ENCODE measurements at regions of chr1 and their contacts with region 1.

Region 1: DNA sequence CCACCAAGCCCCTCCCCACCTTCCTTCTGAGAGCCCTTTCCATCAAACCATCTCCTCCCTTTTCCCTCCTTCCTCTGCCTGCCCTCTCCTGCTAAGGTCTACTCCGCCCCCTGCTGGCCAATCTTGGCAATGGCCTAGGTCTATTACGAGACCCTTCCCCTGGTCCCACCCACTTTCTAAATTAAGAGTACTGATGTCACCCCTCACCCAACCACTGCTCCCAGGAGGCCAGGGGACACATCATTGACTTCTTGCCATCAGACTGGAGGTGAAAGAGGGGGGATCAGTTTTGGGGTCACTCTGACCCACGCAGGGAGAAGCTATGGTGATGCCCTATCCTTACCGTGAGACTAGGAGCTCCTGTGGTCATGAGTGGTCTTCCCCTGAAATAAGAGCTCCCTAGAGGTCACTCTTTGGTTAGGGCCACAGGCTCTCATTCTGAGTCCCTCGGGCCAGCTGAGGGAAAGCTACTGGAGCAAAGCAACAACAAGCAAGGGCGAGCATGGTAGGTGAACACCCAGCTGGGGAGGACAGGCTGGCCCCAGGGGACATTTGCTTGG is 34.6 kb upstream of the S100A7 start:
- DNase-seq: peak; percentile 63 to 79 (median 67)
- ATAC-seq: no peak
- H3K4me3 ChIP-seq: no peak overlapping the region
- H3K27ac ChIP-seq: no peak overlapping the region
- H3K4me1 ChIP-seq: peaks cover 8% of the 10 kb centered on the region
- H3K27me3 ChIP-seq: no peaks in the 10 kb centered on the region
- CTCF ChIP-seq: peak; percentile 71 to 96 (median 82)
- POLR2A ChIP-seq: no peak

Region 2: DNA sequence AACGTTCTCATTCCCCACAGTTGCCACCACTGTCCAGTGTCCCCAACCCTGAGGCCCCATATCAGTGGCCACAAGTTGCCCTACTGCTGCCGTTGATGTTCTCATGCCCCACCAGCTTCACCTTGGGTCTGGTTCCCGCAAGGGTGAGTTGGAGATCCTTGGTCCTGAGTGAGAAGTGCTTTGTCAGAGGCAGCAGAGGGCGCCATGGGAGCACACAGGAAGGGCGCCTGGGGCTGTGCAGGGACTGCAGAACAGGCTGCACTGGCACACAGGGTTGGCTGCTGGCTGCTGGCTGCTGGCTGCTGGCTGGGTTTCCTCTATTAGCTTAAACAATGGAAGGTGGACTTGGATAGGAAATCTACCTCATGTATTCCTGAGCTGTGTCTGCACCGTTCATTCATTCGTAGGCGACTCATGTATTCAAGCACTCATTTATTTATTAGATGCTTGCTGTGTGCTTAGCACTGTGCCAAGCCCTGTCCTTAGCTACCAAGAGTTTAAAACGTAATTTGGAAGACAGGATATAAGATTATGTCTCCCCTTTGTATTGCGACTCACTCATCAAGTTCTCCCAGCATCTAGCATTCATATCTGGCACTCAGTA is 139.5 kb before region 1 on chr1:
- intact Hi-C with region 1: loop called (anchors 5 kb)
- DNase-seq: peak in 3 of 4 donors; percentile 32 to 67 (median 39)
- ATAC-seq: no peak
- H3K4me3 ChIP-seq: no peak overlapping the region
- H3K27ac ChIP-seq: no peak overlapping the region
- H3K4me1 ChIP-seq: no peaks in the 10 kb centered on the region
- H3K27me3 ChIP-seq: no peaks in the 10 kb centered on the region
- CTCF ChIP-seq: peak in 4 of 7 experiments; percentile 14 to 37 (median 16)
- POLR2A ChIP-seq: no peak